Breast epithelium (tissue), 4 donors: ENCODE measurements at regions of chr1 and their contacts with region 1.

Region 1: GRCh38 chr1:181263054-181263453 is 174.6 kb downstream of the IER5 start:
- DNase-seq: no peak
- H3K4me3 ChIP-seq: no peak overlapping the region
- H3K27ac ChIP-seq: no peak overlapping the region
- H3K4me1 ChIP-seq: no peaks in the 10 kb centered on the region
- H3K27me3 ChIP-seq: peaks cover 0 to 12% of the 10 kb centered on the region in 2 donors
- CTCF ChIP-seq: no peak
- POLR2A ChIP-seq: no peak

Region 2: GRCh38 chr1:179447489-179447888 is 1815.6 kb before region 1 on chr1:
- intact Hi-C with region 1: loop called (anchors 10 kb)
- DNase-seq: no peak
- H3K4me3 ChIP-seq: no peak overlapping the region
- H3K27ac ChIP-seq: no peak overlapping the region
- H3K4me1 ChIP-seq: no peaks in the 10 kb centered on the region
- H3K27me3 ChIP-seq: no peaks in the 10 kb centered on the region
- CTCF ChIP-seq: no peak
- POLR2A ChIP-seq: no peak